CD8-positive, alpha-beta T cell (primary cell): ENCODE measurements at regions of chr1 and their contacts with region 1.

Region 1: GRCh38 chr1:228500901-228501871 is 14.0 kb downstream of the RNF187 start:
- DNase-seq: peak; percentile 77 to 95 (median 89)
- ATAC-seq: peak; percentile 99
- H3K4me3 ChIP-seq: peak overlapping the region; percentile 35 to 54
- H3K4me3 Mint-ChIP-seq: peak overlapping the region; percentile 73
- H3K27ac ChIP-seq: peak overlapping the region in 1 of 2 experiments; percentile 56
- H3K27ac Mint-ChIP-seq: peak overlapping the region; percentile 77
- H3K4me1 ChIP-seq: peaks cover 17% of the 10 kb centered on the region
- H3K4me1 Mint-ChIP-seq: peaks cover 24% of the 10 kb centered on the region
- H3K27me3 ChIP-seq: no peaks in the 10 kb centered on the region
- H3K27me3 Mint-ChIP-seq: peaks cover 3% of the 10 kb centered on the region
- CTCF ChIP-seq: peak; percentile 87

Region 2: DNA sequence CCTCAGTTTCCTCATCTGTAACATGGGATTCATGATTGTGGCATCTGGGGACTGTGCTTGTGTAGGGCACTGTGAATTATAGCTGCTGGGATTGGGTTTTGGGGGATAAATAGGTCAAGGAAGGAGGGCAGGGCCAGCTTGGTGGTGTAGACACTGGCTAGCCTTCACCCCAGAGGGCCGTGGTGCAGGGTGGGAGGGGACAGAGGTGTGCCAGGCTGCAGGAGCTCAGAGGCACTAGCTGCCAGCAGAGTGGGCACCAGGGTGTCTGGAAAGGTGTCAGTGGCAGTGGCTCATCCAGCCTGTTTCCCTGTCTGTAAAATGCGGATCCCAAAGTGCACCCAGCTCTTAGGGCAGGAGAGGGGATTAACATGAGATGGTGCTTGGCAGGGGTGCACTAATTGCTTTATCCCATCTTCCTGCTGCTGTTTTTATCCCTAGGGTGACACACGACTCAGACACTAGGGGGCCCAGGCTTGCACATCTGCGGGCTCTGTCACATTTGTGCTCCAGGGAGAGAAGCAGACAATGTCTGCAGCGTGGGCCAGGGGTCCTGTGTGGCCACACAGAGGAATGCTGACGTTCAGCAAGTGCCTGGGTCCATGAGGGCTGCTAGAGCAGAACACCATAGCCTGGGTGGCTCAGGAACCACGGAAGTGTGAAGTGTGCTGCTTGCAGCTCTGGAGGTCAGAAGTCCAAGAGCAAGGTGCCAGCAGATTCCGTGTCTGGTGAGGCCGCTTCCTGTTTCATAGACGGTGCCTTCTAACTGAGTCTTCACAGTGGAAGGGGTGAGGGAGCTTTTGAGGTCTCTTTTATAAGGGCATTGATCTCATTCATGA is 274.0 kb before region 1 on chr1:
- CTCF ChIA-PET with region 1: no interaction called
- POLR2A ChIA-PET with region 1: no interaction called
- intact Hi-C with region 1: no loop called
- DNase-seq: no peak
- ATAC-seq: no peak
- H3K4me3 ChIP-seq: no peak overlapping the region
- H3K4me3 Mint-ChIP-seq: no peak overlapping the region
- H3K27ac ChIP-seq: no peak overlapping the region
- H3K27ac Mint-ChIP-seq: no peak overlapping the region
- H3K4me1 ChIP-seq: no peaks in the 10 kb centered on the region
- H3K4me1 Mint-ChIP-seq: no peaks in the 10 kb centered on the region
- H3K27me3 ChIP-seq: no peaks in the 10 kb centered on the region
- H3K27me3 Mint-ChIP-seq: no peaks in the 10 kb centered on the region
- CTCF ChIP-seq: no peak

Region 3: GRCh38 chr1:228457396-228458176 is 43.6 kb before region 1 on chr1:
- CTCF ChIA-PET with region 1: interaction called, 14 read pairs
- POLR2A ChIA-PET with region 1: no interaction called
- intact Hi-C with region 1: loop called (anchors 5 kb)
- DNase-seq: peak; percentile 68 to 98 (median 80)
- ATAC-seq: peak; percentile 85
- H3K4me3 ChIP-seq: peak overlapping the region; percentile 69 to 91
- H3K4me3 Mint-ChIP-seq: peak overlapping the region; percentile 93
- H3K27ac ChIP-seq: peak overlapping the region; percentile 91 to 93
- H3K27ac Mint-ChIP-seq: peak overlapping the region; percentile 99
- H3K4me1 ChIP-seq: peaks cover 23% of the 10 kb centered on the region
- H3K4me1 Mint-ChIP-seq: peaks cover 39% of the 10 kb centered on the region
- H3K27me3 ChIP-seq: no peaks in the 10 kb centered on the region
- H3K27me3 Mint-ChIP-seq: peaks cover 4% of the 10 kb centered on the region
- CTCF ChIP-seq: peak; percentile 31

Region 4: GRCh38 chr1:228478912-228479711 is 22.1 kb before region 1 on chr1:
- CTCF ChIA-PET with region 1: interaction called, 10 read pairs
- POLR2A ChIA-PET with region 1: no interaction called
- intact Hi-C with region 1: no loop called
- DNase-seq: peak in 2 of 9 experiments; percentile 52 to 61
- ATAC-seq: peak; percentile 52
- H3K4me3 ChIP-seq: no peak overlapping the region
- H3K4me3 Mint-ChIP-seq: no peak overlapping the region
- H3K27ac ChIP-seq: peak overlapping the region in 1 of 2 experiments; percentile 63
- H3K27ac Mint-ChIP-seq: peak overlapping the region; percentile 77
- H3K4me1 ChIP-seq: peaks cover 8% of the 10 kb centered on the region
- H3K4me1 Mint-ChIP-seq: peaks cover 17% of the 10 kb centered on the region
- H3K27me3 ChIP-seq: no peaks in the 10 kb centered on the region
- H3K27me3 Mint-ChIP-seq: no peaks in the 10 kb centered on the region
- CTCF ChIP-seq: no peak

Region 5: DNA sequence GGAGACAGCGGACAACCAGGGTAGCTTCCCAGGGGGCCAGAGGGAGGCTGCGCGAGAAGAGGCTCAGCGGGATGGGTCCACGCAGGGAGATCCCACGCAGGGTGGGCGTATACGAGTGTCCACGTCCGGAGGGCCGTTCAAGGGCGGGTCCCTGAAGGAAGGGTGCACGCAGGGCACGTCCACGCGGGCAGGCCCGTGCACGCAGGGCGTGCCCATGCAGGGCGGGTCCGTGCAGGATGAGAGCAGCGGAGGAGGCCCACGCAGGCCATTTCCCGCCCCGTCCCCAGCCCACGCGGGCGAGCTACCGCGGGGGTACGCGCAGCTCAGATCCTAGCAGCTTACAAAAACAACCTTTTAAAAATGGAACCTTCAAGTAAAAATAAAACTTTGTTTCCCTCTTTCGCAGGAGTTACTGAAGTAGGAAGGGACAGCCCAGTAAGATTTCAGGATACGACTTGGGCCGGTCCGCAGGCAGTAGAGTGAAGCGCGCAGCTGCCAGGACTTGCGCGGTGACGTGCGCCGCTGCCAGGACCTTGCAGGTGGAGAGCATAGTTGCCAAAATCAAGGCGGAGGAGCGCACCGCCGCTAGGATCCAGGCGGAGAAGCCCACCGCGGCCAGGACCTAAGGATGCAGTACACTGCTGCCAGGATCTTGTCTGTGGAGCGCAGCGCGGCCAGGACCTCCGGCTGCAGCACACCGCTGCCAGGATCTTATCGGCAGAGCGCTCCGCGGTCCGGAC is 14.4 kb before region 1 on chr1:
- CTCF ChIA-PET with region 1: interaction called, 17 read pairs
- POLR2A ChIA-PET with region 1: interaction called, 8 read pairs
- intact Hi-C with region 1: loop called in 1 of 2 experiments (anchors 1 kb)
- DNase-seq: peak; percentile 66 to 94 (median 77)
- ATAC-seq: peak; percentile 75
- H3K4me3 ChIP-seq: peak overlapping the region; percentile 88 to 90
- H3K4me3 Mint-ChIP-seq: peak overlapping the region; percentile 98
- H3K27ac ChIP-seq: peak overlapping the region; percentile 100
- H3K27ac Mint-ChIP-seq: peak overlapping the region; percentile 100
- H3K4me1 ChIP-seq: peaks cover 31% of the 10 kb centered on the region
- H3K4me1 Mint-ChIP-seq: peaks cover 37% of the 10 kb centered on the region
- H3K27me3 ChIP-seq: no peaks in the 10 kb centered on the region
- H3K27me3 Mint-ChIP-seq: no peaks in the 10 kb centered on the region
- CTCF ChIP-seq: no peak

Region 6: DNA sequence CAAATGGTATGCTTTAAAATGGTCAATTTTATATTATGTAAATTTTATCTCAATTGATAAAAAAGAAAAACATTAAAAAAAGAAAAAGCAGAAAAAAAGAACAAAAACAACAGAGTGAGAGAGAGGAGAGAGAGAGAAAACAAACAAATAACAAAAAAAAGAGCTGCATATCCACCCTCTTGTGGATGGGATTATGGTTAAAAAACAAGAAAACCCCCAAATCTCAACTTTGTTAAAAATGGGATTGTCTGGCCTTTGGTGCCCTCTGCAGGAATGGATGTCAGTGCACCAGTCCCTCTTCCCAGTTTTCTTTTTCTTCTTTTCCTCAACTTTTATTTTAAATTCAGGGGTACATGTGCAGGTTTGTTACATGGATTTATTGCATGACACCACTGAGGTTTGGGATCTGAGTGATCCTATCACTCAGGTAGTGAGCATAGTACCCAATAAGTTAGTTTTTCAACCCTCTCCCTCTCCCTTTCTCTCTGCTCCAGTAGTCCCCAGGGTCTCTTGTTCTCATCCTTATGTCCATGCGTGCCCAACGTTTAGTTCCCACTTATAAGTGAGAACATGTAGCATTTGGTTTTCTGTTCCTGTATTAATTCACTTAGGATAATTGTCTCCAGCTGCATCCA is 14.1 kb after region 1 on chr1:
- CTCF ChIA-PET with region 1: interaction called, 54 read pairs
- POLR2A ChIA-PET with region 1: no interaction called
- intact Hi-C with region 1: loop called (anchors 1 kb)
- DNase-seq: peak in 7 of 9 experiments; percentile 7 to 76 (median 33)
- ATAC-seq: peak; percentile 52
- H3K4me3 ChIP-seq: no peak overlapping the region
- H3K4me3 Mint-ChIP-seq: no peak overlapping the region
- H3K27ac ChIP-seq: no peak overlapping the region
- H3K27ac Mint-ChIP-seq: no peak overlapping the region
- H3K4me1 ChIP-seq: peaks cover 11% of the 10 kb centered on the region
- H3K4me1 Mint-ChIP-seq: peaks cover 15% of the 10 kb centered on the region
- H3K27me3 ChIP-seq: no peaks in the 10 kb centered on the region
- H3K27me3 Mint-ChIP-seq: peaks cover 10% of the 10 kb centered on the region
- CTCF ChIP-seq: peak; percentile 93

Region 7: DNA sequence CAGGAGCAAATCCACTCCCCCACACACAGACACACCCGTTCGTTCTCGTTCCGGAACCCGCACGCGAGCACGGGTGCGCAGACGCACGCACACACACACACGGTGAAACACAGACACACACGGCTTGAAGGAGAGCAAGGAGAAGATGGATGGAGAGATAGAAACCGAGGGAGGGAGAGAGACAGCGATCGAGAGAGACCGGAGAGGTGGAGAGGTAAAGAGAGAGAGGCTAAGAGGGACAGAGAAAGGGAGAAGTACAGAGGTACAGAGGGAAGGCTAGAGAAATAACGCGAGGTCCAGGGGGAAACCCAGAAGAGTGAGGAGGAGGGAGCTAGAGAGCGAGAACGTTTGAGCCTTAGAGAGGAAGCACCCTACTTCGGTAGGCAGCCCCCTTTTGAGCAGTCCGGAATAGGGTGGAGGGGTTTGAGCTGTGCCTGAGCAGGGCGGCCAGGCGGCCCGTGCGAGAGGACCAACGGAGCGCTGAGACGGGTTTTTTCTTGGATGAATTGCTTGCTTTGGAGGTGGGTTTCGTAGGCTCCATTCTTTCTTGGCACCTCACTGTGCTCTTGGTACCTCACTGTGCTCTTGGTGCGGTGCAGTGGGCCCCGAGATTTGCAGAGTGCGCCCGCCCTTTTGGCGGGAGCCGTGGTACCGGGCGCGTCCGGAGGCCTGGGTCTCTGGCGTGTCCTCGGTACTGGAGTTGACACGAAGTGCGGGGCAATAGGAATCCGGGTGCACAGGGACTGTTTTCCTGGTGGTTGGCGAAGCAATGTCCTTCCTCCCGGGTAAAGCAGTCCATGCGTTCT is 145.7 kb after region 1 on chr1:
- CTCF ChIA-PET with region 1: no interaction called
- POLR2A ChIA-PET with region 1: no interaction called
- intact Hi-C with region 1: no loop called
- DNase-seq: peak in 6 of 9 experiments; percentile 17 to 75 (median 52)
- ATAC-seq: peak; percentile 69
- H3K4me3 ChIP-seq: peak overlapping the region; percentile 64 to 69
- H3K4me3 Mint-ChIP-seq: peak overlapping the region; percentile 94
- H3K27ac ChIP-seq: no peak overlapping the region
- H3K27ac Mint-ChIP-seq: peak overlapping the region; percentile 30
- H3K4me1 ChIP-seq: peaks cover 23% of the 10 kb centered on the region
- H3K4me1 Mint-ChIP-seq: peaks cover 24% of the 10 kb centered on the region
- H3K27me3 ChIP-seq: peaks cover 18 to 32% of the 10 kb centered on the region in 2 experiments
- H3K27me3 Mint-ChIP-seq: peaks cover 34% of the 10 kb centered on the region
- CTCF ChIP-seq: no peak

Region 8: DNA sequence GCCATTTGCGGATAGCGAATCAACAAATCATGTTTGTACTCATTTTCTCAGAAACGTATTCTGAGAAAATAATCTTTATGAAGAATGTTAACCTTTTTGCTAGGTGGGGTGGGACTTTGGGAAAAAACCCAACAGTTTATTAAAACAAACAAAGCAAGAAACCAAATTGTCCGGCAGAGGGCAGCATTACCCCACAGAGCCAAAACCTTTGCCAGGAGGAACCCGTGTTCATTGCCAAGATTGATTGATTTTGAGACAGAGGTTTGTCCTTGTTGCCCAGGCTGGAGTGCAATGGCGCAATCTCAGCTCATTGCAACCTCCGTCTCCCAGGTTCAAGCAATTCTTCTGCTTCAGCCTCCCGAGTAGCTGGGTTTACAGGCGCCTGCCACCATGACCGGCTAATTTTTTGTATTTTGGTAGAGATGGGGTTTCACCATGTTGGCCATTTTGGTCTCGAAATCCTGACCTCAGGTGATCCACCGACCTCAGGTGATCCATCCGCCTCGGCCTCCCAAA is 163.3 kb after region 1 on chr1:
- CTCF ChIA-PET with region 1: interaction called, 3 read pairs
- POLR2A ChIA-PET with region 1: no interaction called
- intact Hi-C with region 1: loop called in 1 of 2 experiments (anchors 10 kb)
- DNase-seq: peak; percentile 58 to 86 (median 79)
- ATAC-seq: peak; percentile 48
- H3K4me3 ChIP-seq: no peak overlapping the region
- H3K4me3 Mint-ChIP-seq: no peak overlapping the region
- H3K27ac ChIP-seq: no peak overlapping the region
- H3K27ac Mint-ChIP-seq: no peak overlapping the region
- H3K4me1 ChIP-seq: no peaks in the 10 kb centered on the region
- H3K4me1 Mint-ChIP-seq: peaks cover 3% of the 10 kb centered on the region
- H3K27me3 ChIP-seq: no peaks in the 10 kb centered on the region
- H3K27me3 Mint-ChIP-seq: no peaks in the 10 kb centered on the region
- CTCF ChIP-seq: peak; percentile 90

Region 9: GRCh38 chr1:229094476-229095311 is 593.5 kb after region 1 on chr1:
- CTCF ChIA-PET with region 1: no interaction called
- POLR2A ChIA-PET with region 1: no interaction called
- intact Hi-C with region 1: no loop called
- DNase-seq: no peak
- ATAC-seq: no peak
- H3K4me3 ChIP-seq: no peak overlapping the region
- H3K4me3 Mint-ChIP-seq: no peak overlapping the region
- H3K27ac ChIP-seq: no peak overlapping the region
- H3K27ac Mint-ChIP-seq: no peak overlapping the region
- H3K4me1 ChIP-seq: peaks cover 12% of the 10 kb centered on the region
- H3K4me1 Mint-ChIP-seq: peaks cover 16% of the 10 kb centered on the region
- H3K27me3 ChIP-seq: no peaks in the 10 kb centered on the region
- H3K27me3 Mint-ChIP-seq: no peaks in the 10 kb centered on the region
- CTCF ChIP-seq: no peak